ENCODE measurements at regions of chr17 and their contacts with region 1.

Region 1: DNA sequence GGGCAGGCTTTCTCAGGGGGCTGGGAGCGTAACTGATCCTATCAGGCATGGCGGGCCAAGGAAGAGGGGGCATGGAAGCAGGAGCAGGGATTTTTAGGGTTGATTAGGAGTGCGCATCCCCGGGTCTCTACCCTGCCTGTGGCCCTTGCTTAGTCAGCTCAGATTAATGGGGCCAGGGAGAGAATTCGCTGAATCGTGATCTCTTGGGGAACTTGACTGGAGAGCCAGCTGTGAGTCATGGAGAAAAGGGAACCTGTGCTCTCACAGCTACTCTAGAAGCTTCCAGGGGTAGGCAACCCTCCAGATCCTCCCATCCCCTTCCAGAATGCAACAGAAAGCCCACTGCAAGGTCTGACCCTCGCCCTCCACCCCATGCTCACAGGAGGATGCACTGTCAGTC is 3.6 kb downstream of the FOXN1 start:
- DNase-seq: no peak
- CTCF ChIP-seq: no peak

Region 2: DNA sequence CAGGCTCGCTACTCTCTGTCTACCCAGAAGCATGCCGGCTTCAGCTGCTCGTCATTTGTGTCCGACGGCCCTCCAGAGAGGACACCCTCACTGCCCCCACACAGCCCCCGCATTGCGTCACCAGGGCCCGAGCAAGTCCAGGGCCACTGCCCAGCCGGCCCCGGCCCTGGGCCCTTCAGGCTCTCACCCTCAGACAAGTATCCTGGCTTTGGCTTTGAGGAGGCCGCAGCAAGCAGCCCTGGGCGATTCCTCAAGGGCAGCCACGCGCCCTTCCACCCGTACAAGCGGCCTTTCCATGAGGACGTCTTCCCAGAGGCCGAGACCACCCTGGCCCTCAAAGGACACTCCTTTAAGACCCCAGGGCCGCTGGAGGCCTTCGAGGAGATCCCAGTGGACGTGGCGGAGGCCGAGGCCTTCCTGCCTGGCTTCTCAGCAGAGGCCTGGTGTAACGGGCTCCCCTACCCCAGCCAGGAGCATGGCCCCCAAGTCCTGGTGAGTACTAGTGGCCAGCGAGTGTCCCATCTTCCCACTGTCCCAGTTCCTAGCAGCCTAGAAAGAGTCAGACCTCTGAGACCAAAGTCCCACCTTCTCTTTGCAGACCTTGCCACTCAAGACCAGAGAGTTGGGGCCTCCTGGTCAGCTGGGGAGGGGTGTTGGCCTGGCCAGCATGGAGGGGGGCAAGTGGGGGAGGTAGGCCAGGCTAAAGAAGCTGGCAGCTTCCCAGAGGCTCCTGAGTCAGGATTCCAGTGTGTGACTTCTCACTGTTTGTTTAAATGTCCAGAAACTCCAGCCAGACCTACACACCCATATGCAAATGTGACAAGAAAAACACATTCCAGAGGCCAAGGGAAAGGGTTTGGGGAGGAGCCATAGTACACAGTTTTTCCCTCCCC is 14.9 kb after region 1 on chr17:
- CTCF ChIA-PET with region 1: interaction called, 260 read pairs
- POLR2A ChIA-PET with region 1: no interaction called
- DNase-seq: no peak
- CTCF ChIP-seq: no peak